Activated B cell treated with CpG ODN at 0.5 μM for 24 hours (primary cell): ENCODE measurements at regions of chr3 and their contacts with region 1.

Region 1: DNA sequence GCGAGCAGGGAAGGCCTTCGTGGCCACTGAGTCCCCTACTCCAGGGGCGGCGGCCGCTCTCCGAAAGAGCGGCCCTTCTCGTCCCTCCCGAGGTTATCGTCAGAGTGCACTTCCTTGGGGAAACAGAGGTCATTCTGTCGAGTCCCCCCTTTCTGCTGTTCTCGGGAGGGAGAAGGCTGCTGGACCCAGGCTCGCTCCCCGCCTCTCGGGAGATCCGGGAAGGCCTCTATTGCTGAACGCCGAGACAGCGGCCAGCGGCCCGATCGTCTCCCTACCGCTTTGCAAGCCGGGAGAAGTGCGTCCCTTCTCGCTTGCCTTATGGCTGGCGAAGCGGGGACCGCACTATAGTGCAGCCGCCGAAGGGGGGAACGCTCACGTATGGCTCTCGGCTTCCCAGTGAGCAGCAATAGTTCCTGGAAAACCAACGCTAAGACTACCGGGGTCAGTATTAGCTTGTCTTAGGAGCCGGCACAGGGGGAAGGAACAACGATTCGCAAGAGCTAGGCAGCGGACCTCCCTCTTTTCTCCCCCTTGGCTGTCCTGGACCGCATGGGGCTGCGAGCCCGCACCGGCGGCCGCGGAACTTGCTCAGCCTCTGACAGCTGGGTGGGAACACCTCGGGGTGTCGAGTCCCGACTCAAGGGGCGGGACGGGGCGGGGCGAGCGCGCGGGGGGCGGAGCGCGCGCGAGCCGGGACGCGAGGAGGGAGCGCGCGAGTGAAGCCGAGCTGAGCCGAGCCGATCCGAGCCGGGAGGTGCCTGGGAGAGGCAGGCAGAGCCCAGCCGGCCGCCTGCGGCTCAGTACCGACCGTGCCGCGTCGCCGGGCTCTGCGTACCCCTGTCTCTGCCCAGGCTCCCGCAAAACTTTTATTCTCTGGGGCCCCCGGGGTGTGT is 930 bp upstream of the PPM1L start:
- DNase-seq: peak; percentile 79
- ATAC-seq: peak; percentile 85
- H3K4me3 Mint-ChIP-seq: peak overlapping the region; percentile 92
- H3K27ac Mint-ChIP-seq: peak overlapping the region; percentile 94
- H3K4me1 Mint-ChIP-seq: peaks cover 27% of the 10 kb centered on the region
- H3K27me3 Mint-ChIP-seq: peaks cover 12% of the 10 kb centered on the region
- CTCF ChIP-seq: no peak

Region 2: GRCh38 chr3:158801696-158802408 is 1953.2 kb before region 1 on chr3 and contains the start of gene MFSD1:
- CTCF ChIA-PET with region 1: no interaction called
- POLR2A ChIA-PET with region 1: no interaction called
- intact Hi-C with region 1: loop called (anchors 5 kb)
- DNase-seq: peak; percentile 82
- ATAC-seq: peak; percentile 89
- H3K4me3 Mint-ChIP-seq: peak within 1 kb of the TSS; percentile 94
- H3K27ac Mint-ChIP-seq: peak within 1 kb of the TSS; percentile 87
- H3K4me1 Mint-ChIP-seq: peaks cover 37% of the 10 kb centered on the region
- H3K27me3 Mint-ChIP-seq: no peaks in the 10 kb centered on the region
- CTCF ChIP-seq: no peak
- total RNA-seq, gene MFSD1: 36.8 and 41.6 TPM in 2 replicates

Region 3: DNA sequence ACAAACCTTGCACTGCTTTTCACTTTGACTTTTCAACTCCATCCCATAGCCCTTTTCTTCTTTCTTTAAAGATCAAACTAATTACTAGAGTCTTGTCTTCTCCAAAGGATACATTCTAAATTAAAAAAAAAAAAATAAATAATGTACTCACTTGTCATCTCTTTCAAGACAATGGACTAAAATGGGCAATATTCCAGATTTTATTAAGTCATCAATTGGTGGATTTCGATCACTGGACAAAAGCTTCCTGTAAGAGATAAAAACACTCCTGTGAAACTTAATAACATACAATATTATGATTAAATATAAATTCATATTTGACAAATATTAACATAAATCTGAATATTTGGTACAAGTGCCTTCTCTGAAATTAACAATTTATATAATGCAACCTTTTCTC is 223.8 kb before region 1 on chr3:
- CTCF ChIA-PET with region 1: no interaction called
- POLR2A ChIA-PET with region 1: no interaction called
- intact Hi-C with region 1: no loop called
- DNase-seq: no peak
- ATAC-seq: no peak
- H3K4me3 Mint-ChIP-seq: no peak overlapping the region
- H3K27ac Mint-ChIP-seq: no peak overlapping the region
- H3K4me1 Mint-ChIP-seq: no peaks in the 10 kb centered on the region
- H3K27me3 Mint-ChIP-seq: no peaks in the 10 kb centered on the region
- CTCF ChIP-seq: no peak

Region 4: DNA sequence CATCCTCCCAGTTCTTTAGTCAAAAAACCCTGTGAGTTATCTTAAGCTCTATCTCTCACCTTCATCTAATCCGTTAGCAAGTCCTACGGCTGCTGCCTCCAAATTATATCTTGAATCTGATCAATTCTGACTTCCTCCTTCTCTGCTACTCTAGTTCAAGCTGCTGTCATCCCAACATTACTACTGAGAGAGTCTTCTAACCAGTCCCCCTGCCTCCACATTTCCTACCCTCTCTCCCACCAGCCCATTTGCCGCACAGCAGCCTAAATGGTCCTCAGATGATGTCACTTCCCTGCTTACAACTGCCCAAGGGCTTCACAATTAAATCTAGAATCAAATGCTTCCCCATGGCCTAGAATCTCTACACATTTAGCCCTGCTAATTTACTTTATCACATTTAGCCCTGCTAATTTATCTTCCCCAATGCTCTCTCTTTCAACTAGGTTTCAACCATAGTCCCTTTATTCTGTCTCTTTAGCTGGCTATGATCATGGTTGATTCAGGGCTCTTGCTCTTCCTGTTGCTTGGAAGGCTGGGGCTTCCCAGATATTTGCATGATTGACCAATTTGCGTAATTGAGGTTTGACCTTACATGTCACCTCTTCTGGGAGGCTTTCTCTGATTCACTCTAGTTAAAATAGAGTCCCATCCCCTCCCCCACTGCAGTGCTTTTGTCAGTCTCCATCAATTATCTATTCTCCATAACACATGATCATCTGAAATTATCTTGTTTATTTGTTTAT is 89.1 kb before region 1 on chr3:
- CTCF ChIA-PET with region 1: no interaction called
- POLR2A ChIA-PET with region 1: no interaction called
- intact Hi-C with region 1: loop called (anchors 1 kb)
- DNase-seq: no peak
- ATAC-seq: peak; percentile 79
- H3K4me3 Mint-ChIP-seq: peak overlapping the region; percentile 39
- H3K27ac Mint-ChIP-seq: peak overlapping the region; percentile 79
- H3K4me1 Mint-ChIP-seq: peaks cover 26% of the 10 kb centered on the region
- H3K27me3 Mint-ChIP-seq: no peaks in the 10 kb centered on the region
- CTCF ChIP-seq: no peak

Region 5: GRCh38 chr3:160686955-160687535 is 68.1 kb before region 1 on chr3:
- CTCF ChIA-PET with region 1: no interaction called
- POLR2A ChIA-PET with region 1: no interaction called
- intact Hi-C with region 1: no loop called
- DNase-seq: no peak
- ATAC-seq: no peak
- H3K4me3 Mint-ChIP-seq: no peak overlapping the region
- H3K27ac Mint-ChIP-seq: no peak overlapping the region
- H3K4me1 Mint-ChIP-seq: no peaks in the 10 kb centered on the region
- H3K27me3 Mint-ChIP-seq: no peaks in the 10 kb centered on the region
- CTCF ChIP-seq: no peak

Region 6: DNA sequence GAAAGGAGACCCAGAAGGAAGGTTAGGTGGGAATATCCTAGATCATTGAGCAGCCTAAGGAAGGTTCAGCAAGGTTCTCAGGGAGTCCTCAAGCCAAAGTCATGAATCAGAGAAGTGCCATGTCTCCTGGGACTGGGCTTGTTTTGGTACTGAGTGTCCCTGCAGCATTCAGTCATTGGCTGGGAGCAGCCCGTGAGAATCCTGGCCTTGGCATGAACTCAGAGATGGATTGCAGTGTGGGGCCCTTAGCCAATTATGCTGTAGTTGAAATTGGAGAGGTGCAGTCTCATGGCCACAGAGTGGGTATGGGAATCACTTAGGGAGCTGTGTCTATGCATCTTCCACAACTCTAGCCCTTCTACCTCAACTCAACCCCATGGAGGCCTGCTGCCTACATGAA is 16.0 kb before region 1 on chr3:
- CTCF ChIA-PET with region 1: no interaction called
- POLR2A ChIA-PET with region 1: no interaction called
- intact Hi-C with region 1: no loop called
- DNase-seq: no peak
- ATAC-seq: no peak
- H3K4me3 Mint-ChIP-seq: no peak overlapping the region
- H3K27ac Mint-ChIP-seq: no peak overlapping the region
- H3K4me1 Mint-ChIP-seq: no peaks in the 10 kb centered on the region
- H3K27me3 Mint-ChIP-seq: peaks cover 9% of the 10 kb centered on the region
- CTCF ChIP-seq: no peak

Region 7: GRCh38 chr3:160941885-160942494 is 186.9 kb after region 1 on chr3:
- CTCF ChIA-PET with region 1: no interaction called
- POLR2A ChIA-PET with region 1: no interaction called
- intact Hi-C with region 1: loop called (anchors 1 kb)
- DNase-seq: no peak
- ATAC-seq: peak; percentile 87
- H3K4me3 Mint-ChIP-seq: no peak overlapping the region
- H3K27ac Mint-ChIP-seq: no peak overlapping the region
- H3K4me1 Mint-ChIP-seq: peaks cover 4% of the 10 kb centered on the region
- H3K27me3 Mint-ChIP-seq: no peaks in the 10 kb centered on the region
- CTCF ChIP-seq: no peak

Region 8: GRCh38 chr3:161104561-161105551 is 349.8 kb after region 1 on chr3 and contains the start of gene B3GALNT1:
- CTCF ChIA-PET with region 1: no interaction called
- POLR2A ChIA-PET with region 1: no interaction called
- intact Hi-C with region 1: loop called (anchors 10 kb)
- DNase-seq: peak; percentile 39
- ATAC-seq: peak; percentile 85
- H3K4me3 Mint-ChIP-seq: peak within 1 kb of the TSS; percentile 82
- H3K27ac Mint-ChIP-seq: no peak within 1 kb of the TSS
- H3K4me1 Mint-ChIP-seq: peaks cover 12% of the 10 kb centered on the region
- H3K27me3 Mint-ChIP-seq: peaks cover 8% of the 10 kb centered on the region
- CTCF ChIP-seq: no peak
- total RNA-seq, gene B3GALNT1: 4.6 and 8.5 TPM in 2 replicates